Posterior vena cava (tissue), 2 donors: ENCODE measurements at regions of chr3 and their contacts with region 1.

Region 1: GRCh38 chr3:167750272-167750971 is 14.9 kb downstream of the SERPINI1 start:
- DNase-seq: no peak

Region 2: DNA sequence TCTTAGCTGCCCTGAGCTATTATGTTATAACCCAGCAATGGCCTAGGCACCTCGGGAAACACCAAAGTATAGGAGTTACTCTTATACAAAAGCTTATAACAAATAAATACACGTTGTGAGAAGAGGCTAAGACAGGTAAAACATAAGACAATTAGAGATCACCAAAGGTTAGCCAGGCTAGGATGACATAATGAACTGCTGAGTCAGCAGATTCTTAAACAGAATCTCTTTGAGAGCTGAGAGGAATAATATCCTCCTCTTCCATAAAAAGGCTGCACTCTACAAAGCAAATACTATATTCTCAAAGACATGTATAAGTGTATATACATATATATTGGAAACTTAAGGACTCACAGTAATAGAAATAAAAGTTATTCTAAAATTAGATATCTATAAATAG is 308.1 kb after region 1 on chr3:
- intact Hi-C with region 1: loop called in 1 of 2 experiments (anchors 5 kb)
- DNase-seq: no peak